Common myeloid progenitor, CD34-positive (primary cell): ENCODE measurements at regions of chr19 and their contacts with region 1.

Region 1: GRCh38 chr19:38095411-38096308 is 128.4 kb downstream of the DPF1 start:
- DNase-seq: peak; percentile 64 to 87 (median 81)
- H3K4me3 ChIP-seq: no peak overlapping the region
- H3K27ac ChIP-seq: peak overlapping the region in 1 of 2 experiments; percentile 17
- H3K4me1 ChIP-seq: peaks cover 0 to 4% (median 1%) of the 10 kb centered on the region in 4 experiments
- H3K27me3 ChIP-seq: no peaks in the 10 kb centered on the region

Region 2: DNA sequence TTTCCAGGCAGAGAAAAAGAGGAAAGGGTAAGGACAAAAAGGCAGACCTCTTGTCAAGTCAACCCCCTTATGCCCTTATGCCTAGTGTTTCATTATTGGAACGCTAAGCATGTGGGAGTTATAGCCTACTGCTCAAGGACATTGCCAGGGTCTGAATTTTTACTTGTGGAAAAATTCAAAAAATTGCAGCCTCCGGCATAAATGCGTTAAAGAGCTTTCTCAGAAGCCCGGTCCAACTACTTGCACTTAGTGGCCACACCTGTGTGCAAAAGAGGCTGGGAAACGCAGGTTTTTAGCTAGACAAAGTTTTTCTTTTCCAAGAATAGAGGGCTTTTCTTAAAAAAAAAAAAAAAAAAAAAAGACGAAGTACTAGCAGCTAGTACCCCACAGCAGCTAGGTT is 11.4 kb before region 1 on chr19:
- CTCF ChIA-PET with region 1: interaction called, 10 read pairs
- POLR2A ChIA-PET with region 1: no interaction called
- DNase-seq: no peak
- H3K4me3 ChIP-seq: no peak overlapping the region
- H3K27ac ChIP-seq: no peak overlapping the region
- H3K4me1 ChIP-seq: peaks cover 0 to 7% (median 3%) of the 10 kb centered on the region in 4 experiments
- H3K27me3 ChIP-seq: no peaks in the 10 kb centered on the region